ENCODE measurements at regions of chr6 and their contacts with region 1.

Region 1: GRCh38 chr6:33208091-33208967 is at the start of gene RING1:
- DNase-seq: peak; percentile 75 to 80
- ATAC-seq: peak; percentile 78 to 79
- H3K4me3 ChIP-seq: peak within 1 kb of the TSS; percentile 79 to 92 (median 90)
- H3K27ac ChIP-seq: peak within 1 kb of the TSS; percentile 93 to 99 (median 96)
- H3K4me1 ChIP-seq: peaks cover 25 to 37% of the 10 kb centered on the region in 2 donors
- H3K27me3 ChIP-seq: no peaks in the 10 kb centered on the region
- CTCF ChIP-seq: no peak
- POLR2A ChIP-seq: peak; percentile 97 to 99
- total RNA-seq, gene RING1: 7.4 to 16.3 (median 12.1) TPM

Region 2: DNA sequence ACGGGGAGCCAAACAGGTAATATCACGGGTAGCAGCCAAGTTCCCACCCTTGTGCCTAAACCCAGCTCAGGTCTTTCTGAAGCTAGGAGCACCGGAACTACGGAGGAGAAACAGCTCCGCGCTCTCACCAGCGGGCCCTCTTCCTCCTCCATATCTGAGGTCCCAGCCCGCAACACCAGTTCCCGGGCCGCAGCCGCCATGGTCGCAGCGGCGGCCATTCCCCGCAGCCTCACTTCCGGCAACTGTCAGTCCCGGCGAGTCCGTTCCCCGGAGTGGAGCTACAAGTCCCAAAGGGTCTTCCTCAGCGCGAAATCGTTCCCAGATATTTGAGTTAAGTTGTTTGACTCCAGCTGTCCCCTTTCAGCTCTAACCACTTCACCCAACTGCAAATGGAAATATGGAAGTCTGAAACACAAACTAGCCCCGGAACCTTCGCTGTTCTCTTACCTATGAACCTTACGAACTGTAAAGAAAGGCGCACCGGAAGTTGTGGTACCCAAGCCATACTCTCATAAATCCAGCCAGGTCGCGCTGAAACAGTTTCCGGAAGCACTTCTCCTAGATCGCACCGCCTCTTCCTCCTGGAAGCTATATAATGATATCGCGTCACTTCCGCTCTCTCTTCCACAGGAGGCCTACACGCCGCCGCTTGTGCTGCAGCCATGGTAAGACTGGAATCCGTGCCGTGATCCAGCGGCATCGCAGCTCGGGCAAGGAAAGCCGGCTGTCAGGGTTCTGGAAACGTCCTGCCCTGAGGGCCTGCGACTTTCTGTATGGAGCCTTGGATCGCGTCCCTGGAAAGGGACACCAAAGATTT is 63.3 kb after region 1 on chr6 and contains the starts of genes RPS18 and VPS52:
- in situ Hi-C with region 1: no loop called
- intact Hi-C with region 1: loop called (anchors 2 kb)
- DNase-seq: peak; percentile 95 to 96
- ATAC-seq: peak; percentile 98 to 99
- H3K4me3 ChIP-seq: peak within 1 kb of the TSS; percentile 67 to 95 (median 80)
- H3K27ac ChIP-seq: peak within 1 kb of the TSS; percentile 85 to 96 (median 90)
- H3K4me1 ChIP-seq: peaks cover 46 to 53% of the 10 kb centered on the region in 2 donors
- H3K27me3 ChIP-seq: no peaks in the 10 kb centered on the region
- CTCF ChIP-seq: no peak
- POLR2A ChIP-seq: peak; percentile 92 to 95
- total RNA-seq, gene RPS18: 1,834 to 2,142 (median 2,010) TPM
- total RNA-seq, gene VPS52: 28.7 to 52.8 (median 41.2) TPM

Measured in gastrocnemius medialis (tissue), 4 donors.